ENCODE measurements at regions of chr13 and their contacts with region 1.

Region 1: DNA sequence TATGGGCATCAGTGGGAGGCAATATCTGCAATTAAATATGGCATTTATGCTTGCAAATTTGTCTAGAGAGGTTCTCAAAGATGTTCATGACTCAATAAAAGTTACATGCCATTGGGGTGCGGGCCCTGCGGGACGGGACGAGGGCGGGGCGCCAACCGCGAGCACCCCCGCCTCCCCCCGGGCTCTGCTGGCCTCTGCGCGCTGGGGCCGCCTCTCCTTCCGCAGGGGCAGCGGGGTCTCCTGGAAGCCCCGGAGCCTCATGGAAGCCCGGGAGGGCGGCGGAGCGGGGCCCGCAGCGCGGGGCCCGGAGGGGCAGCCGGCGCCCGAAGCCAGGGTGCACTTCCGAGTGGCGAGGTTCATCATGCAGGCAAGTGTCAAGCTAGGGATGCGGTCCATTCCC is 179.2 kb downstream of the TPTE2 start:
- DNase-seq: no peak
- H3K4me3 ChIP-seq: no peak overlapping the region
- H3K27ac ChIP-seq: no peak overlapping the region
- H3K4me1 ChIP-seq: no peaks in the 10 kb centered on the region
- CTCF ChIP-seq: no peak

Region 2: GRCh38 chr13:19606152-19606551 is 224.0 kb after region 1 on chr13:
- CTCF ChIA-PET with region 1: no interaction called
- POLR2A ChIA-PET with region 1: no interaction called
- intact Hi-C with region 1: loop called (anchors 5 kb)
- DNase-seq: no peak
- H3K4me3 ChIP-seq: no peak overlapping the region
- H3K27ac ChIP-seq: no peak overlapping the region
- H3K4me1 ChIP-seq: no peaks in the 10 kb centered on the region
- CTCF ChIP-seq: no peak

Measured in OCI-LY7 (cell line).